ENCODE measurements at regions of chr1 and their contacts with region 1.

Region 1: GRCh38 chr1:155250633-155251449 is 4.4 kb downstream of the ENTREP3 start:
- DNase-seq: peak; percentile 98
- CTCF ChIP-seq: peak; percentile 100

Region 2: GRCh38 chr1:155591770-155592169 is 340.9 kb after region 1 on chr1:
- in situ Hi-C with region 1: loop called (anchors 25 kb)
- DNase-seq: peak; percentile 58
- CTCF ChIP-seq: peak; percentile 58

Measured in GM13977 (cell line).